SK-N-SH (cell line): ENCODE measurements at regions of chr16 and their contacts with region 1.

Region 1: GRCh38 chr16:1113889-1114526 is 18.0 kb upstream of the C1QTNF8 start:
- DNase-seq: no peak
- H3K4me3 ChIP-seq: no peak overlapping the region
- H3K27ac ChIP-seq: no peak overlapping the region
- H3K4me1 ChIP-seq: no peaks in the 10 kb centered on the region
- H3K27me3 ChIP-seq: peaks cover 77% of the 10 kb centered on the region
- CTCF ChIP-seq: no peak
- EP300 ChIP-seq: no peak
- RAD21 ChIP-seq: no peak

Region 2: DNA sequence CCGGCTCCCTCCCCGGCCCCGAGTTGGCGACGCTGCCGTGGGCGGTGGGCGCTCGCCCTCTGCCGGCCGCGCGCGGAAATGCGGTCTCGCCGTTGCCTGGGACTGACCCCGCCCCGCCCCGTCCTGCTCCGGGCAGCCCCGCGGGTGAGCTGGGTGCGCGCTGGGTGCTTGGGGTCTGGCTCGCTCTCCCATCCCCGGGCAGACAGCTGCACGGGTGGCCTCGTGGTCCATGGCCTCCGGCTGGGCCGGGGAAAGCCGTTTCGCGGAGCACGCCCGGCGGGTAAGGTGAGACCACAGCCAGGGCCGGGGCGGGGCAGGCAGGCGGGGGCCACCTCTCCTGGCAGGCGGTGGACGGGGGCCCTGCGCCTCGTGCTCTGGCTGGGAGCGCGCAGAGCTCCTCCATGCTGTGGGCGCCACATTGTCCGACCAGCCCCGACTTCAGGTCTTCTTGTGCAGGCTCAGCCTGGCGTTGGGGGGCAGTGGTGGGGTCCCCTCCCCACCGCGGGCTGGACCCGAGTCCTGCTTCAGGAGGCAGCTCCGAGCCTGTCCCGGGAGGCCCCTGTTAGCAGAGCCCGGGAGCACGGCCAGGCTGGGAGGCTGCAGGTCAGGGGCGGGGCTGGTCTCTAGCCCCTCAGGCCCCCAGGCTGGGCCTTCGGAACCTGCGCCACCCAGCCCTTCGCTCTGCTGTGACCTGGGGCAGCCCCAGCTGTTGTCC is 10.9 kb before region 1 on chr16:
- CTCF ChIA-PET with region 1: interaction called, 14 read pairs
- POLR2A ChIA-PET with region 1: no interaction called
- DNase-seq: peak; percentile 93
- H3K4me3 ChIP-seq: no peak overlapping the region
- H3K27ac ChIP-seq: no peak overlapping the region
- H3K4me1 ChIP-seq: no peaks in the 10 kb centered on the region; a peak in 1 of 4 replicates
- H3K27me3 ChIP-seq: peaks cover 81% of the 10 kb centered on the region
- CTCF ChIP-seq: peak; percentile 56
- EP300 ChIP-seq: no peak
- RAD21 ChIP-seq: peak; percentile 59